GM13976 (cell line): ENCODE measurements at regions of chr1 and their contacts with region 1.

Region 1: GRCh38 chr1:67559222-67559700 is 125.7 kb upstream of the GADD45A start:
- DNase-seq: no peak
- CTCF ChIP-seq: no peak

Region 2: DNA sequence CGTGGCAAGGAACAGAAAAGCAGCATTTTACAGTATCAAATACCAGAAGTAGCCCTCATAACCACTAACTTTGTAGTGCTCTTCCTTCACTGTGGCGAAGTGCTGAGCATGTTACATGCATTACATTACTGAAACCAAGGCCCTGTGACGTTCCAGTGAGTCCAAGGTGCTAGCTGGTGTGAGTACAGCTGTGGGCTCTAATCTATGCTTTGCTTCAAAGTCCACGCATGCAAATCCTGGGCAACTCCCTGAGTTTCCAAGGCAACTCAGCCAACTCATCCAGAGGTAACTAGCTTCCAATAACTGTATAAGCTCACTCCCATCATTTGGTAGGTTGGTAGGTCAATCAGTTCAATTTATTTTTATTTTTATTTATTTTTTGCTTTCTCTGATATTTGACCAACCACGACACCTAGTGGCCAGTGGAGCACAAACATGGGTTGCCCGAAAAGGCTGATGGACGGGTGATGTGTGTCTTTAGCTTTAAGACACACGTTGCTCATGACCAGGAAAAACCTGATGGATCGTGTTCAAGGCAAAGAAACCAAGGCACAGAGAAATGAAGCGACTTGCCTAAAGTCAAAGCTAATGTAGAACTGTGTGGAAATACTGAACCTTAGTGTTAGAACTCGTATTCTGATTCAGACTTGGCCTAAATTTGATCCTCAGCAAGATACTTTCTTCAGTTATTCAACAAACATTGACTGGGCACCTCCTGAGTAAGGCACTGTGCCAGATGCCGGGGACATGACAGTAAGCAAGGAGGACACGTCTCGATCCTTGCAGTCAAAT is 201.0 kb after region 1 on chr1:
- in situ Hi-C with region 1: loop called (anchors 10 kb)
- DNase-seq: peak; percentile 73
- CTCF ChIP-seq: peak; percentile 64